Uterus (tissue), 4 donors: ENCODE measurements at regions of chr17 and their contacts with region 1.

Region 1: GRCh38 chr17:49556223-49556971 is 19.3 kb upstream of the NXPH3 start:
- DNase-seq: peak; percentile 75 to 88
- H3K4me3 ChIP-seq: no peak overlapping the region
- H3K27ac ChIP-seq: no peak overlapping the region
- H3K4me1 ChIP-seq: peaks cover 0 to 5% of the 10 kb centered on the region in 2 donors
- H3K27me3 ChIP-seq: no peaks in the 10 kb centered on the region
- CTCF ChIP-seq: peak; percentile 93 to 99 (median 98)
- POLR2A ChIP-seq: peak in 1 of 2 donors; percentile 10

Region 2: GRCh38 chr17:49180303-49180702 is 376.1 kb before region 1 on chr17:
- intact Hi-C with region 1: no loop called
- DNase-seq: peak; percentile 26 to 50
- H3K4me3 ChIP-seq: no peak overlapping the region
- H3K27ac ChIP-seq: no peak overlapping the region
- H3K4me1 ChIP-seq: no peaks in the 10 kb centered on the region
- H3K27me3 ChIP-seq: no peaks in the 10 kb centered on the region
- CTCF ChIP-seq: peak; percentile 60 to 77 (median 63)
- POLR2A ChIP-seq: no peak

Region 3: GRCh38 chr17:49434821-49435670 is 121.4 kb before region 1 on chr17:
- intact Hi-C with region 1: loop called (anchors 5 kb)
- DNase-seq: peak; percentile 37 to 39
- H3K4me3 ChIP-seq: no peak overlapping the region
- H3K27ac ChIP-seq: no peak overlapping the region
- H3K4me1 ChIP-seq: no peaks in the 10 kb centered on the region
- H3K27me3 ChIP-seq: peaks cover 0 to 8% of the 10 kb centered on the region in 2 donors
- CTCF ChIP-seq: peak; percentile 56 to 67 (median 59)
- POLR2A ChIP-seq: no peak

Region 4: DNA sequence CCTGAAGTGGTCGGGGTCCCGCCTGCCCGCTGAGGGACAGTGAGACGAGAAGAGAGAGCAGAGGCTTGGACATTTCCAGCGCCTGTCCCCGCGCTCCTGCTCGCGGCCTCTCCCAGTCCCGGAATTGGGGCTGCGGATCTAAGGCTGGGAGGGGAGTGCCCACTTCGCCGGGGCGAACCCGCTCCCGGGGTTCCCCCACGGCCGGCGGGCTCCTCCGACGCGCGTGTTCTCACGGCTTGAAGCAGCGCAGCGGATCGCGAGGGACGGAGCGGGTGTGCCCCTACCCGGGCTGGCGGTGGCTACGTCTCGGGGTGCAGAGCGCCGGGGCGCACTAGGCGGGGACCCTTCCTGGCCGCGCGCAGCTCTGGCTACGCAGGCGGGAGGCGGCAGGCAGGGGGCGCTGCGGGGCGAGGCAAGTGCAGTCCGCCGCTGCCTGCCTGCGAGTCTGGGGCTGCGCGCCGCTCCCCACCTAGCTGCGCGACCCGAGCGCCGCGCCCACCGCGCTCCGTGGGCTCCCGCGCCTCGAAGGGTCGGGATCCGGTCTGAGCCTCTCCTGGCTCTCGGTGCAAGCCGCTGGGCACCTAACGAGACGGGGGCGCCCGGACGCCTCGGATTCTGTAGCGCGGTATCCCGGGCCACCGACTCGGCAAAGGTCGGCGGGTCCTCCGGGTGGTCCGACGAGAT is 60.1 kb before region 1 on chr17:
- intact Hi-C with region 1: loop called (anchors 5 kb)
- DNase-seq: peak; percentile 71 to 79
- H3K4me3 ChIP-seq: peak overlapping the region; percentile 24 to 39
- H3K27ac ChIP-seq: no peak overlapping the region
- H3K4me1 ChIP-seq: peaks cover 0 to 14% of the 10 kb centered on the region in 2 donors
- H3K27me3 ChIP-seq: peaks cover 8 to 12% of the 10 kb centered on the region in 2 donors
- CTCF ChIP-seq: peak; percentile 72 to 96 (median 93)
- POLR2A ChIP-seq: peak in 1 of 2 donors; percentile 25